Dorsolateral prefrontal cortex (tissue), 120 donors: ENCODE measurements at regions of chr5 and their contacts with region 1.

Region 1: GRCh38 chr5:1799602-1800471 is at the start of gene MRPL36:
- DNase-seq: peak; percentile 81 to 90 (median 87)
- H3K4me3 ChIP-seq: peak within 1 kb of the TSS; percentile 70 to 100 (median 97)
- H3K27ac ChIP-seq: peak within 1 kb of the TSS; percentile 51 to 96 (median 91)
- H3K27me3 ChIP-seq: no peaks in the 10 kb centered on the region
- CTCF ChIP-seq: peak in 17 of 56 donors; percentile 8 to 38 (median 22)
- total RNA-seq, gene MRPL36: 20.6 to 47.0 (median 33.2) TPM

Region 2: DNA sequence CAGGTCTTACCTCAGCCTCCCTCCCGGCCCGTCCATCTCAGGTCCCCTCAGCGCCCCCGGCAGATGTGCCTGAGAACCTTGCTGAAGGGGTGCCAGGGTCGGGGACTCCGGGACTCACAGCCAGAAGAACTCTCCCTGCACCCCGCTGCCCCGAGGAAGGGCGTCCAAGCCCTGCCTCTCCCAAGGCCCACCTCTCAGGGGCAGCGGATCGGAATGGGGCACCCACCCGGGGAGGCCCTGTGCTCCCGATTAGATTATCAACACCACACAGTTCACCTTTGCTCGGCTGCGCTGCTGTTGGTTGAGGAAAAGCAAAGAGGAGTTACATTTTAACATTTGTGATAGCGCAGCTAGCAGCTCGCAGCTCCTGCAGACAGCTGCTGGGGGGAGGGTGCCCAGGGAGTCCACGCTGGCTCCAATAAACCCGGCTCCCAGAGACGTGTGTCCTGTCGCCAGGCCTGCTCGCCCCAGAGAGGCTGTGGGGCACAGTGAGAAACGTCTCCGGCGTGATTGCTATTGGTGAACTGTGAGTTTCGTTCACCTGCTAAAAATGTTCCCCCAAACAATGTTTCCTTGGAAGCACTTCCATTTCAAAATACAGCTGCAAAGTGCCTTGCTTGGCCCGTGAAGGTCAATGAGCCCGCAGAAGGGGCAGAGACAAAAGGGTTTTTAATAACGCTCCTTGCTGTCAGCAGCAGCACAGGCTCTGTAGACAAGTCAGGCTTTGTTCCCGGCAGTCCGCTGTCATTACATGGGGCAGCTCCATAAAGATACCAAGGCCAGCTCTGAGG is 617.0 kb before region 1 on chr5:
- intact Hi-C with region 1: loop called in 1 of 2 experiments (anchors 10 kb)
- DNase-seq: peak in 9 of 10 donors; percentile 48 to 89 (median 74)
- H3K4me3 ChIP-seq: peak overlapping the region in 38 of 59 donors; percentile 1 to 54 (median 32)
- H3K27ac ChIP-seq: peak overlapping the region in 58 of 59 donors; percentile 37 to 96 (median 84)
- H3K27me3 ChIP-seq: peaks cover 0 to 22% (median 4%) of the 10 kb centered on the region in 45 donors
- CTCF ChIP-seq: peak in 12 of 56 donors; percentile 11 to 45 (median 24)

Region 3: GRCh38 chr5:1703352-1704050 is 96.3 kb before region 1 on chr5:
- intact Hi-C with region 1: no loop called
- DNase-seq: no peak
- H3K4me3 ChIP-seq: no peak overlapping the region
- H3K27ac ChIP-seq: no peak overlapping the region
- H3K27me3 ChIP-seq: peaks cover 0 to 48% (median 20%) of the 10 kb centered on the region in 45 donors
- CTCF ChIP-seq: no peak